ENCODE measurements at regions of chr12 and their contacts with region 1.

Region 1: DNA sequence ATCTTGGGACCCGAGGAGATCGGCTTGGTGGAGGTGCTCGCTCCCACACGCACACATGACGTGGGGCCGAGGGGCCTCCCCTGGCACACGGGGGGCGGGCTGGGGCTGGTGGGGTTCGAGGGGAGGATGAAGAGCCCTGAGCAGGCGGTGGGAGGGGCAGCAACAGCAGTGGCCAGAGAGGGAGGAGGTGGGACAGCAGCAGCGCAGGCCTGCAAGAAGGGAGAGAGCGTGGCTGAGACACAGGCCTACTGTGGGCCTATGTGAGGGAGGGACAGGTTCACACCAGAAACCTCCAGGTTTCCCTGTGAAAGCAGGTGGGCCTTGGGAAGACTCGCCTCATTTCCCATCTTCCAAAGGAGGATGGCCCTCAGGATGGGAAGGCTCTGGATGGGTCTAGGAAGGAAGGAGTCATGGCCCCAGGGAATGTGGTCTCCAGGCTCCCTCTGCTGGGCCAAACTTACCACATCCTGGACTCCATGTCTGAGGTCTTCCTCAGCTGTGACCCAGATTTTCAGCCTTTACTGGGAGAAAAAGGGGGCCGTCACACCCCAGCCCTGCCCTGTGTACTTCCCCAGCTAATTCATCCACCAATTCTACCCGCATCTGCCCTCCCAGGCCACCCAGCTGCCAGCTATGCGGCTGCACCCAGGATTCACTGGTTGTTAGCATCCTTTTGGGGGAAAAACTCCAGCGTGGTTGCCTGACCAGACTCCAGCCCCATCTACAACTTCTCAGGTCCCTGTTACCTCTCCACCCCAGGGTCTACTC is 2.8 kb downstream of the PIANP start:
- DNase-seq: peak; percentile 45
- ATAC-seq: peak; percentile 84
- H3K4me3 ChIP-seq: no peak overlapping the region
- H3K27ac ChIP-seq: no peak overlapping the region
- H3K4me1 ChIP-seq: peaks cover 24% of the 10 kb centered on the region
- H3K27me3 ChIP-seq: peaks cover 9 to 68% of the 10 kb centered on the region in 2 experiments
- CTCF ChIP-seq: peak; percentile 86
- EP300 ChIP-seq: no peak
- POLR2A ChIP-seq: no peak
- RAD21 ChIP-seq: peak; percentile 82

Region 2: DNA sequence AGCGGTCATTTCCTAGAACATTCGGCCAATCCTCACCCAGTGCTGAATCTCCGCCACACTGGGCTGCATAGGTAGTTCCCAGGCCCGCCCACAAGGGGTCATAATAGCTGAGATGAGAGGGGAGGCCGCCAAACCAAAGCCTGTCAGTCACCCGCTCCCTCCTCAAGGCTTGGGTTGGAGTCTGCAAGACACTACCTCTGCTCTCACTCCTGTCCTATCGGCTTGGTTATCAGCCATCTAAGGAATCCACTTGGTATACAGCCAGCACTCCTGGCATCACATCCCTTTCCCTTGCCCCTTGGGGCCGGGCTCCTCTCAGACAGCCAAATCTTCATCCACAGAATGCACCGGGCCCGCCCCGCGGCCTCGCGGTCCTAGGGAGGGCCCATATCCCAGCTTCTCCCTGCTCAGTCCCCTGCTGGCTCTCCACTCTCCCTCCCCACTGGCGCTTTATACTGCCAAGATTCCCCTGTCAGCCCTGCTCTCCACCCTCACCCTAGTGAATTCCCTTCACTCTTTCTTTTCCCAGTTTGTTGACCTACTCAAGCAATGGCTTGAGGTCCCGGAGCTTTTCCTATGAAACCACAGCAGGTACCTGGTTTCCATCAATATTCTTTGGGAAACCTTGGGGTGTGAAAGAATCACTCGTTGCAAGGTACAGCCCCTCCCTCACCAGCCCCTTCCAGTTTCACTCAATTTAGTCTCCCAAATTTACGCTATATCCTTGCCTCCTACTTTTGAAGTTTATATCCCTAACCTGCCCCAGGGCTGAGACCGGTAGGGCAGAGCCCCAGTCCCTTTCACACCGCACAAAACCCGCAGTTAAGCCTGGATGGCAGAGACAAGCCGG is 143.4 kb before region 1 on chr12:
- CTCF ChIA-PET with region 1: interaction called, 4 read pairs
- POLR2A ChIA-PET with region 1: no interaction called
- in situ Hi-C with region 1: no loop called
- intact Hi-C with region 1: loop called (anchors 5 kb)
- DNase-seq: peak; percentile 77
- ATAC-seq: peak; percentile 72
- H3K4me3 ChIP-seq: peak overlapping the region; percentile 77 to 95 (median 92)
- H3K27ac ChIP-seq: peak overlapping the region; percentile 42
- H3K4me1 ChIP-seq: peaks cover 43% of the 10 kb centered on the region
- H3K27me3 ChIP-seq: no peaks in the 10 kb centered on the region; a peak in 1 of 5 replicates
- CTCF ChIP-seq: peak; percentile 86
- EP300 ChIP-seq: no peak
- POLR2A ChIP-seq: 0 out of 4 replicates have a peak, but pooled peaks of 1 of the 2 experiments have one; percentile 25
- RAD21 ChIP-seq: peak; percentile 38; the same call in 1 of the 2 replicates

Region 3: GRCh38 chr12:6662906-6663742 is 34.6 kb before region 1 on chr12 and contains the start of gene ING4:
- CTCF ChIA-PET with region 1: interaction called, 7 read pairs
- POLR2A ChIA-PET with region 1: no interaction called
- in situ Hi-C with region 1: loop called (anchors 5 kb)
- intact Hi-C with region 1: no loop called
- DNase-seq: peak; percentile 99
- ATAC-seq: peak; percentile 99
- H3K4me3 ChIP-seq: peak within 1 kb of the TSS; percentile 77 to 92 (median 87)
- H3K27ac ChIP-seq: peak within 1 kb of the TSS; percentile 72
- H3K4me1 ChIP-seq: peaks cover 18% of the 10 kb centered on the region
- H3K27me3 ChIP-seq: no peaks in the 10 kb centered on the region; a peak in 1 of 5 replicates
- CTCF ChIP-seq: no peak
- EP300 ChIP-seq: peak in 1 of 2 experiments; percentile 39; a peak in 2 of 4 replicates
- POLR2A ChIP-seq: peak; percentile 42 to 52; a peak in 3 of 4 replicates
- RAD21 ChIP-seq: 0 out of 2 replicates have a peak, but pooled peaks have one; percentile 12
- total RNA-seq, gene ING4: 12.7 and 14.4 TPM in 2 replicates